ENCODE measurements at regions of chr5 and their contacts with region 1.

Region 1: DNA sequence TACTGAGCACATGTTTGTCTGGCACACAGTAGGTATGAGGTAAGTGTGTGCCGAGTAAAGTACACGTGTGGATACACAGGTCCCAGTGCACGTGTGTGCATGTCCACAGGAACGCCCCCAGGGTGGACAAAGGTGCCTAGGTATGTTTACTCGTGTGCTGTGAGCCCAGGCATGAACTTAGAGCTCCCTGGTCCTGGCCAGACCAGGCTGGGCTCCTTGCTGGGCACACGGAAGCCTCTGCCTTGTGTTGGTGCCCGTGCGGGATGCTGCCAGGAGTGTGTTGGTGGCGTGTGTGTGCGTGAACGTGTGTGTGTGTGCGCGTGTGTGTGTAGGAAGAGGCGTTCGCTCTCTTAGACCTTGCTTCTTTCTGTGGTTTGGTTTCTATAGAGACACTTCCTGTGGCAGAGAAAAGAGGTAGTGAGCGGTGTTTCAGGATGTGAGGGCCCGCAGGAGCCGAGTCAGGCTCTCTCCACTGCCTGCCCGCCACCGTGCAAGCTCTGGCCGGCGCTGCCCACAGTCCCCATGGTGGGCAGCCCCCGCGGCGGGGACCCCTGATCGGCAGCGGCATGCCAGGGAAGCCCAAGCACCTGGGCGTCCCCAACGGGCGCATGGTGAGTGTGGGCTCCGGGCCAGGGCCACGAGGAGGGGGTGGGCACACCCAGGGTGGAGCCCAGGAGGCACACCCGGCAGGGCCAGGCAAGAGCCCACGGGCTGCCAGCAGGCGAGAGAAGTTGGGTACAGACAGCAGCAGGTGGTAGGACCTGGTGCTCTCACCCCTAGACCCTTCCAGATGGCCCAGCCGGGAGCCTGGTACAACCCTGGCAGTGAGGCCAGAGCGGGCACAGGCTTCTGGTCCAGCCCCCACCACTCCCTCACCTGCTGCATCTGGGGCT is at the start of gene RGS14:
- DNase-seq: peak; percentile 36 to 91 (median 75)
- ATAC-seq: peak; percentile 87
- H3K4me3 ChIP-seq: peak within 1 kb of the TSS; percentile 90 to 95
- H3K4me3 Mint-ChIP-seq: peak within 1 kb of the TSS; percentile 84
- H3K27ac ChIP-seq: peak within 1 kb of the TSS; percentile 67 to 74
- H3K27ac Mint-ChIP-seq: peak within 1 kb of the TSS; percentile 94
- H3K4me1 ChIP-seq: peaks cover 67% of the 10 kb centered on the region
- H3K4me1 Mint-ChIP-seq: peaks cover 77% of the 10 kb centered on the region
- H3K27me3 ChIP-seq: no peaks in the 10 kb centered on the region
- H3K27me3 Mint-ChIP-seq: no peaks in the 10 kb centered on the region
- CTCF ChIP-seq: no peak
- total RNA-seq, gene RGS14: 22.7 to 23.5 TPM

Region 2: GRCh38 chr5:177336112-177336511 is 21.6 kb before region 1 on chr5:
- CTCF ChIA-PET with region 1: no interaction called
- POLR2A ChIA-PET with region 1: no interaction called
- intact Hi-C with region 1: no loop called
- DNase-seq: peak in 2 of 9 experiments; percentile 42 to 50
- ATAC-seq: peak; percentile 62
- H3K4me3 ChIP-seq: no peak overlapping the region
- H3K4me3 Mint-ChIP-seq: no peak overlapping the region
- H3K27ac ChIP-seq: no peak overlapping the region
- H3K27ac Mint-ChIP-seq: no peak overlapping the region
- H3K4me1 ChIP-seq: peaks cover 13% of the 10 kb centered on the region
- H3K4me1 Mint-ChIP-seq: peaks cover 21% of the 10 kb centered on the region
- H3K27me3 ChIP-seq: no peaks in the 10 kb centered on the region
- H3K27me3 Mint-ChIP-seq: no peaks in the 10 kb centered on the region
- CTCF ChIP-seq: no peak

Region 3: GRCh38 chr5:177370488-177371119 is 12.9 kb after region 1 on chr5:
- CTCF ChIA-PET with region 1: interaction called, 26 read pairs
- POLR2A ChIA-PET with region 1: interaction called, 24 read pairs
- intact Hi-C with region 1: loop called in 1 of 2 experiments (anchors 2 kb)
- DNase-seq: peak in 8 of 9 experiments; percentile 18 to 81 (median 58)
- ATAC-seq: peak; percentile 63
- H3K4me3 ChIP-seq: no peak overlapping the region
- H3K4me3 Mint-ChIP-seq: no peak overlapping the region
- H3K27ac ChIP-seq: peak overlapping the region in 1 of 2 experiments; percentile 48
- H3K27ac Mint-ChIP-seq: peak overlapping the region; percentile 32
- H3K4me1 ChIP-seq: peaks cover 73% of the 10 kb centered on the region
- H3K4me1 Mint-ChIP-seq: peaks cover 69% of the 10 kb centered on the region
- H3K27me3 ChIP-seq: no peaks in the 10 kb centered on the region
- H3K27me3 Mint-ChIP-seq: no peaks in the 10 kb centered on the region
- CTCF ChIP-seq: no peak

Region 4: DNA sequence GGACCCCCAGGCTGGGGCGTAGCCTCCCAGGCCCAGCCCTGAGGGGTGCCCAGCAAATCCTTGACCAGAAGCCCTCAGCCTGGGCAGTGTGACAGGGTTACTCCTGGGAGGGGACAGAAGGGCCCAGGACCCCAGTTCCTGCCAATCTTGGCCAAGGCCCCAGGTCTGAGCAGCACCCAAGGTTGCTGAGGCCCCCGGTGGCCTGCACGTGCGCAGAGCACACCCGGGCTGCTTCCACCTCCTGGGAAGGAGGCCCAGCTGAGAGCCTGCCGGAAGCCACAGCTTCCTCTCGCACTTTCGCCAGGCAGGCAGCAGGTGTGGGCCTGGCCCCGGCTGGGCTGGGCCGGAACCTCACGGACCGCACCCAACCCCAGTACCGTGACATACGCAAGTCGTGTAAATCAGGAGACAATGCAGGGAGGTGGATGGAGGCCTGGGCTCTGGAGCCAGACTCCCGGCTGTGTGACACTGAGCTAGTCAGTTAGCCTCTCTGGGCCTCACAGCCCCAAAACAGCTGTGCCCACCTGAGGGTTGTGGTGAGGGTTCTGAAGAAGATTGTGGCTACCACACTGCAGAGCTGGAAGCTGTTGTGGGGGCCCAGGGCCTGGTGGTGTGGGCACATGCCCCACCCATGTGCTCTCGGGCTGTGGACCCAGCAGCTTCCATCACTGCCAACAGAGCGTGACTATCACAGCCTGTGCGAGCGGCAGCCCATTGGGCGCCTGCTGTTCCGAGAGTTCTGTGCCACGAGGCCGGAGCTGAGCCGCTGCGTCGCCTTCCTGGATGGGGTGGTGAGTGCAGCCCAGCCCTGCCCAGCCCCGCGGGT is 73.8 kb after region 1 on chr5:
- CTCF ChIA-PET with region 1: no interaction called
- POLR2A ChIA-PET with region 1: no interaction called
- intact Hi-C with region 1: loop called in 1 of 2 experiments (anchors 2 kb)
- DNase-seq: peak in 8 of 9 experiments; percentile 59 to 93 (median 78)
- ATAC-seq: peak; percentile 44
- H3K4me3 ChIP-seq: peak overlapping the region; percentile 37 to 98
- H3K4me3 Mint-ChIP-seq: peak overlapping the region; percentile 91
- H3K27ac ChIP-seq: peak overlapping the region; percentile 69 to 89
- H3K27ac Mint-ChIP-seq: peak overlapping the region; percentile 91
- H3K4me1 ChIP-seq: peaks cover 91% of the 10 kb centered on the region
- H3K4me1 Mint-ChIP-seq: peaks cover 66% of the 10 kb centered on the region
- H3K27me3 ChIP-seq: no peaks in the 10 kb centered on the region
- H3K27me3 Mint-ChIP-seq: no peaks in the 10 kb centered on the region
- CTCF ChIP-seq: no peak

Measured in CD8-positive, alpha-beta T cell (primary cell).